ENCODE measurements at regions of chr14 and their contacts with region 1.

Region 1: GRCh38 chr14:70027785-70028428 is 148.7 kb downstream of the SMOC1 start:
- DNase-seq: peak; percentile 72
- ATAC-seq: peak; percentile 80
- H3K4me3 Mint-ChIP-seq: no peak overlapping the region
- H3K27ac Mint-ChIP-seq: no peak overlapping the region
- H3K4me1 Mint-ChIP-seq: no peaks in the 10 kb centered on the region
- H3K27me3 Mint-ChIP-seq: no peaks in the 10 kb centered on the region

Region 2: DNA sequence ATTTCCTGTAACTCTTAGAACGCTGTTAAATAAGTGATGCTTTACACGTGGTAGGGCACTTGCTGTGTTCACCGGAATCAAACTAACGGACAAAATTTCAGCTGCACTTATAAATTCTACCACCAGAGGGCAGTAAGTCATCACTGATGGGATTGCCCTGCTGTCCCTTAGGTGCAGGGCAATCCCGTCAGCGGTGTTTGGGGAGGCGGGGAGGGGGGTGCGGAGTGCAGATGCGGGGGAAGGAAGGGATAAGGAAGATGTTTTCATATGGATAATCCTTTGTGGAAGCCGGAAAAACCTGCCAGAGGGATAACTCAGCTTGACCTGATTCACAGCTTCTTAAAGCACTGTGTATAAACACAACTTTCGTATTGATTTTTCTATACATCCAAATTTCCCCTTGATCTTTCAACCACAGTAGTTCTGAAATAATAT is 209.1 kb before region 1 on chr14:
- CTCF ChIA-PET with region 1: interaction called, 49 read pairs
- DNase-seq: peak; percentile 63
- ATAC-seq: peak; percentile 81
- H3K4me3 Mint-ChIP-seq: no peak overlapping the region
- H3K27ac Mint-ChIP-seq: no peak overlapping the region
- H3K4me1 Mint-ChIP-seq: peaks cover 4% of the 10 kb centered on the region
- H3K27me3 Mint-ChIP-seq: peaks cover 8% of the 10 kb centered on the region

Region 3: DNA sequence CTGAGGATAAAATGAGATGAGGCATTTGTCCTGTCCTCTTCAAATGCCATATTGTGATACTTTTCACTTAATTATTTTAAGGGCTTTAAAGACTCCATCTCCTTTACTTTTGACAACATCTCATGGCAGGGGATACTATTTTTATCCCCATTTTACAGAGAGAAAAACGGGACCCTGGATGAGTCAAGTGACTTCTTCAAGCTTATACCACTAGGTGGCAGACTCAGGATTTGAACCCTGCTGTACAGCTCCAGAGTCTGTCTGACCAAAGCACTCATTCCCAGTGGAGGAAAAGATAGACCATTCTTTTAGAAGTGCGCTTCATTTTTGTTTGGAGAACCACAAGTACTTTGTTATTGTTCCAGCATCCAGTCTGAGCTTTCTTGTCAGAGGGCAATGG is 150.4 kb before region 1 on chr14:
- CTCF ChIA-PET with region 1: interaction called, 26 read pairs
- DNase-seq: no peak
- ATAC-seq: no peak
- H3K4me3 Mint-ChIP-seq: no peak overlapping the region
- H3K27ac Mint-ChIP-seq: no peak overlapping the region
- H3K4me1 Mint-ChIP-seq: no peaks in the 10 kb centered on the region
- H3K27me3 Mint-ChIP-seq: peaks cover 74% of the 10 kb centered on the region

Region 4: DNA sequence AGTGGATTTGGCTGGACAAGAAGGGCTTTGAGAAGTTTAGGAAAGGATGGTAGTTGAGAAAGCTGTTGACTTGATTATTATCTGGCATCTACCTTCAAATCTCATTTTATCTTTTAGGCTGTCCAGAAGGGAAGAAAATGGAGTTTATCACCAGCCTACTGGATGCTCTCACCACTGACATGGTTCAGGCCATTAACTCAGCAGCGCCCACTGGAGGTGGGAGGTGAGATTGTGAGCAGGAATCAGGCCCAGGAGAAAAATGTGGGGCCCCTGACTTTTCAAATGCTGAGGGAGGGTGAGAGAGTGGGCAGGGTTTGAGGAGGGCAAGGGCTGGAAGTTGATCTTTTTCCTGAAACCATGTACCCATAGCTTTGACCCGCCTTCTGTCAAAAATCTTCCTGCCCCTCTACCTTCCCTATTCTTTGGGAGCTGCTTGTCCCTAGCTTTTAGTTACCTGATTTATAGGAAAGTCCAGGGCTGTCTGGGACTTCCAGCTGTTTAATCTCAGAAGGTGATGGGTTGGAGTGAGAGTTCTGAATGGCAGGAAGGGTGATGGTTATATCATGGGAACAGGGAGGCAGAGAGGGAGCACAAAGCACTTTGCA is 14.5 kb before region 1 on chr14:
- CTCF ChIA-PET with region 1: interaction called, 21 read pairs
- DNase-seq: peak; percentile 57
- ATAC-seq: no peak
- H3K4me3 Mint-ChIP-seq: no peak overlapping the region
- H3K27ac Mint-ChIP-seq: no peak overlapping the region
- H3K4me1 Mint-ChIP-seq: peaks cover 5% of the 10 kb centered on the region
- H3K27me3 Mint-ChIP-seq: peaks cover 23% of the 10 kb centered on the region

Measured in activated CD8-positive, alpha-beta memory T cell treated with anti-CD3 and anti-CD28 coated beads, Interleukin-2, amount 10 ng/mL, durations not matched to agents 7 days and 5 days (primary cell).